Activated CD8-positive, alpha-beta memory T cell treated with anti-CD3 and anti-CD28 coated beads, Interleukin-2, amount 10 ng/mL, durations not matched to agents 7 days and 5 days (primary cell): ENCODE measurements at regions of chr1 and their contacts with region 1.

Region 1: GRCh38 chr1:161382214-161383019 is 14.7 kb upstream of the CFAP126 start:
- DNase-seq: no peak
- ATAC-seq: peak; percentile 84
- H3K4me3 Mint-ChIP-seq: no peak overlapping the region
- H3K27ac Mint-ChIP-seq: no peak overlapping the region
- H3K4me1 Mint-ChIP-seq: peaks cover 17% of the 10 kb centered on the region
- H3K27me3 Mint-ChIP-seq: no peaks in the 10 kb centered on the region

Region 2: GRCh38 chr1:161165742-161166668 is 216.4 kb before region 1 on chr1 and contains the start of gene PPOX:
- CTCF ChIA-PET with region 1: interaction called, 14 read pairs
- DNase-seq: peak; percentile 98
- ATAC-seq: peak; percentile 95
- H3K4me3 Mint-ChIP-seq: peak within 1 kb of the TSS; percentile 83
- H3K27ac Mint-ChIP-seq: peak within 1 kb of the TSS; percentile 95
- H3K4me1 Mint-ChIP-seq: peaks cover 44% of the 10 kb centered on the region
- H3K27me3 Mint-ChIP-seq: no peaks in the 10 kb centered on the region
- total RNA-seq, gene PPOX: 34.5 to 43.9 TPM

Region 3: DNA sequence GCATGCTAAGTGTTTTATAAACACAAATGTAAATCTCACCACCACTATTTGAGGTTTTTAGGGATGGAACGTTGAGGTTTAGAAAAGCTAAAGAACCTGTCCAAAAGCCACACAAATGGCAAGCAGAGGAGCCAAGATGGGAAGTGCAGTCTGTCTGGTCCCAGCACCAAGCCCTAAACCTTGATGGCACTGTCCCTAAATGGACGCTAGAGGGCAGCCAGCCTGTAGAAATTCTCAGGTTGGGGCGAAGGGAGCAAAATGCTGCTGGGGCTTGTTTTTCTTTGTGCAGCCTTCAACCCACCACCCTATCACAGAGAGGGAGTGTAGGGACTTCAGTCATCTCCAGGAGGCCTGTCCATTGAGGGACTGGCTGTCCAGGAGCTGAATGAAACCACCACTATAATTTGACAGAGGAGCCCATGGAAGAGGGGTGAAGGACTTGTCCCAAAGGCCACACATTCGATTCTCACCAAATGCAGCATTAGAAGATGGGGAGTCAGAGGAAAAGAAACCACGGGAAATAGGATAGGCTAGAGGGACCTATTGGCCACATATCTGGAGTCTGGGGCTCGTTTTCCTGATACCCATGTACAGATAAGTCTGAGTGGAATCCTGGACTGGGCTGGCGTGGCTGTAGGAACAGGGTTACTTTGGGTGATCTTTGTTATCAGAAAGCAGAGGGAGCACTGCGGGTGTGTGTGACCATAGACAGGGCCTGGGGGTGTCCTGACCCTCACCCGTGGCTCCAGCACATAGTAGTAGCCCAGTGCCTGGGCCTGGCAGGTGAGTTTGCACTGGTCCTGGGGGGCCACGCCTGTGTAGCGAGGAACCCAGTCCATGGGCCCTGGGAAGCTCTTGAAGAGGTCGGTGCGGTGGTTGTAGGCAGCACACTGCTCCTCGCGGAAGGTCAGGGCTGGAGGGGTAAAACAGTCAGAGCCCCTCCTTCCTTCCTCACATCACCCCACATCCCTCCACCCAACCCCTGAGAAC is 189.6 kb before region 1 on chr1:
- CTCF ChIA-PET with region 1: interaction called, 23 read pairs
- DNase-seq: peak; percentile 82
- ATAC-seq: peak; percentile 94
- H3K4me3 Mint-ChIP-seq: no peak overlapping the region
- H3K27ac Mint-ChIP-seq: peak overlapping the region; percentile 83
- H3K4me1 Mint-ChIP-seq: peaks cover 42% of the 10 kb centered on the region
- H3K27me3 Mint-ChIP-seq: no peaks in the 10 kb centered on the region

Region 4: DNA sequence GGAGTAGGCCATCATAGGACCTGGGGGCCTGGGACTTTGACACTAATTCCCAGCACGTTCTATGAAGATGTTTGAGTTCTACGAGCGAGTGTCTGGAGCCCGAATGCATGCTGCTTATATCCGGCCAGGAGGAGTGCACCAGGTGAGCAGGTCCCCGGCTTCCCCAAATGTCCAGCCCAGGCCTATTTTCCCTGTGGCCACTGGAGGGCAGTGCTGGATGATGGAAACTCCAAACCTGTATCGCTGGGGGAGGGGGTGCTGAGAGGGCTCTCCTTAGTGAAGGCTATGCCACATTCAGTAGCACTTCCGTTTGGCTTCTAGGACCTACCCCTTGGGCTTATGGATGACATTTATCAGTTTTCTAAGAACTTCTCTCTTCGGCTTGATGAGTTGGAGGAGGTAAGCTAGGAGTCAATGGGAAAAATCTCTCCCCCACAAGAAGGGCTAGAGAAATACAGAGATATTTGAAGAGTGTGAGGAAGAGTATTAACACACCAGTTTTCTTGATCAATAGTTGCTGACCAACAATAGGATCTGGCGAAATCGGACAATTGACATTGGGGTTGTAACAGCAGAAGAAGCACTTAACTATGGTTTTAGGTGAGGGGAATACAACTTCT is 172.5 kb before region 1 on chr1:
- CTCF ChIA-PET with region 1: interaction called, 16 read pairs
- DNase-seq: peak; percentile 82
- ATAC-seq: peak; percentile 90
- H3K4me3 Mint-ChIP-seq: no peak overlapping the region
- H3K27ac Mint-ChIP-seq: peak overlapping the region; percentile 57
- H3K4me1 Mint-ChIP-seq: peaks cover 32% of the 10 kb centered on the region
- H3K27me3 Mint-ChIP-seq: no peaks in the 10 kb centered on the region

Region 5: GRCh38 chr1:161324020-161324419 is 58.4 kb before region 1 on chr1:
- CTCF ChIA-PET with region 1: interaction called, 15 read pairs
- DNase-seq: peak; percentile 73
- ATAC-seq: peak; percentile 76
- H3K4me3 Mint-ChIP-seq: no peak overlapping the region
- H3K27ac Mint-ChIP-seq: peak overlapping the region; percentile 50
- H3K4me1 Mint-ChIP-seq: peaks cover 9% of the 10 kb centered on the region
- H3K27me3 Mint-ChIP-seq: no peaks in the 10 kb centered on the region